ENCODE measurements at regions of chr2 and their contacts with region 1.

Region 1: GRCh38 chr2:229800997-229801754 is 86.8 kb upstream of the DNER start:
- DNase-seq: peak; percentile 79
- H3K4me3 Mint-ChIP-seq: no peak overlapping the region
- H3K27ac Mint-ChIP-seq: no peak overlapping the region
- H3K4me1 Mint-ChIP-seq: peaks cover 9% of the 10 kb centered on the region
- H3K27me3 Mint-ChIP-seq: no peaks in the 10 kb centered on the region
- CTCF ChIP-seq: peak; percentile 65

Region 2: DNA sequence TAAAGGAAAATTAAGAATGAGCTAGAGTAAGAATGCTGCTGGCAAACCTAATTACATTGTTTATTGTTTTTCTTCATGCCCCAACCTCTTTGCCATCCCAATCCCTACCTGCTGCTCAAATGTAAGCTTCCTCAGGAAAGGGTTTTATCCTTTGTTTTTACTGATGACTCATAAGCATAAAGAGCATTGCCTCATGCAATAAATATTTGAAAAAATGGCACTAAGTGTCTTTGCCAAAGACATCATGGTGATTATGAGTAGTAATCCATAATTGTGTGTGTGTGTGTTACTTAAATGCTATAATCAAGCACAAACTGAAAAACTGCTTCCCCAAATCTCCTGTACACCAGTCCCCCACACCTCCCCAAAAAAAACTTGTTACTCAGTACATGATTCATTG is 140.2 kb before region 1 on chr2:
- CTCF ChIA-PET with region 1: no interaction called
- POLR2A ChIA-PET with region 1: no interaction called
- intact Hi-C with region 1: no loop called
- DNase-seq: peak; percentile 65
- H3K4me3 Mint-ChIP-seq: no peak overlapping the region
- H3K27ac Mint-ChIP-seq: no peak overlapping the region
- H3K4me1 Mint-ChIP-seq: peaks cover 16% of the 10 kb centered on the region
- H3K27me3 Mint-ChIP-seq: no peaks in the 10 kb centered on the region
- CTCF ChIP-seq: no peak

Region 3: GRCh38 chr2:229815342-229815741 is 14.2 kb after region 1 on chr2:
- CTCF ChIA-PET with region 1: interaction called, 13 read pairs
- POLR2A ChIA-PET with region 1: interaction called, 4 read pairs
- intact Hi-C with region 1: no loop called
- DNase-seq: no peak
- H3K4me3 Mint-ChIP-seq: no peak overlapping the region
- H3K27ac Mint-ChIP-seq: no peak overlapping the region
- H3K4me1 Mint-ChIP-seq: peaks cover 14% of the 10 kb centered on the region
- H3K27me3 Mint-ChIP-seq: no peaks in the 10 kb centered on the region
- CTCF ChIP-seq: no peak

Region 4: DNA sequence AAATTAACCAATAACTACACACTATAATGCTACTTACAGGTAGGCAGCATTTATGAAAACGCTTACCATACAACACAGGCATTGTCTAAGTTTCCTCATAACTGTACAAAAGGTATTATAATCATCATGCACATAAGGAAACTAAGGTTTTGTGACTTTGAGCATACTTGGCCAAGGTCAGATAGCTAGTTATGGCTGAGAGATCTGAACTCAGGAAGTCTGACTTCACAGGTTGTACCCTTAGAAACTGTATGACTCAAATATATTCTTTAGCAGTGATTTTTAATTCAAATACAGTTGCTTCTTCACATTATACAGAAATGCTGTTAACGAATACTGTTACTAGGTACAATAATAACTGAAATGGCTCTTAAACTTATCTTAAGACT is 31.3 kb after region 1 on chr2:
- CTCF ChIA-PET with region 1: interaction called, 17 read pairs
- POLR2A ChIA-PET with region 1: no interaction called
- intact Hi-C with region 1: no loop called
- DNase-seq: no peak
- H3K4me3 Mint-ChIP-seq: no peak overlapping the region
- H3K27ac Mint-ChIP-seq: no peak overlapping the region
- H3K4me1 Mint-ChIP-seq: no peaks in the 10 kb centered on the region
- H3K27me3 Mint-ChIP-seq: no peaks in the 10 kb centered on the region
- CTCF ChIP-seq: no peak

Region 5: DNA sequence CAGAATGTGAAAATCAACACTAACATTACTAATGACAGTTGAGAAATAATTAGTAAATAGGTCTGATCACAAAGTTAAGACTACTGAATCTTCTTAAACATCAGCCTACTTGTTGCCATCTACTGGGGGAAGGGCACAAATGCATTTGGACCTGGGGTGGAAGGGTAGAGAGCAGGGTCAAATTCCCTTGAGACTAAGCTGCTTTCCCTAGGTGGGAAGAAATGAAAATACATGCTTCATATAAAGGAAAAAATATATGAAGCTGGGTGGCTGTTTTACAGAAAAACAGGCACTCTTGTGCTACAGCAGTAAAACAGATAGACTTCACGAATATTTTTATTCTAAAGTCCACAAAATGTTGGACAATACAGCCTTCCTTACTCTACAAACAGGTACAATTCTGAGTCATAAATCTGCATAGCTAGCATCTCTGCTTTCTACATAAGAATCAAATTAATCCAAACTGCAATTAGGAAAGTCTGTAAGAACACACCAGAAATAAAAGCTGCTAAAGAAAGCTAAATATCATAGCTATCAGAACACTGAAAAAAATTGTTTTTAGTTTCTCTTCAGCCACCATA is 109.7 kb after region 1 on chr2:
- CTCF ChIA-PET with region 1: interaction called, 8 read pairs
- POLR2A ChIA-PET with region 1: no interaction called
- intact Hi-C with region 1: loop called (anchors 1 kb)
- DNase-seq: peak; percentile 46
- H3K4me3 Mint-ChIP-seq: no peak overlapping the region
- H3K27ac Mint-ChIP-seq: no peak overlapping the region
- H3K4me1 Mint-ChIP-seq: peaks cover 27% of the 10 kb centered on the region
- H3K27me3 Mint-ChIP-seq: no peaks in the 10 kb centered on the region
- CTCF ChIP-seq: peak; percentile 21

Region 6: DNA sequence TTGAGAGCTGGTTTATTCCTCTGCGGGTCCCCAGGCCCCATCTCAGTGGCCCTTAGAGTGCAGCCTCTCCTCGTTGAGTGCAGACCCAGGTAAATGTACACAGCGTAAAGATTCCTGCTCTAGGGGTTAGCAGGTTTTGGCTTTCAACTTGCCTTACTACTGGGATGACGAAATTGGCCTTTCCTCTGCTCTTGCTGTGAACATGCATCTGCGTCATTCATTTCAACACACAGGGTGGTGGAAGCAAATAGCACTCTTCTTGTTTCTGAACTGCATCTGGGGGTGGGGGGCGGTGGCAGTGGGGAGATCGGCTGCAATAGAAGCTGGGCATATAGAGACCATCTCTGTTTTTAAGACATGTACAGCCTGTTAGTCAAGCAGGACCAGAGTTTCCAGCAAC is 284.0 kb after region 1 on chr2:
- CTCF ChIA-PET with region 1: no interaction called
- POLR2A ChIA-PET with region 1: no interaction called
- intact Hi-C with region 1: no loop called
- DNase-seq: peak; percentile 68
- H3K4me3 Mint-ChIP-seq: no peak overlapping the region
- H3K27ac Mint-ChIP-seq: no peak overlapping the region
- H3K4me1 Mint-ChIP-seq: no peaks in the 10 kb centered on the region
- H3K27me3 Mint-ChIP-seq: no peaks in the 10 kb centered on the region
- CTCF ChIP-seq: no peak

Region 7: GRCh38 chr2:230582851-230583283 is 781.7 kb after region 1 on chr2:
- CTCF ChIA-PET with region 1: no interaction called
- POLR2A ChIA-PET with region 1: no interaction called
- intact Hi-C with region 1: no loop called
- DNase-seq: no peak
- H3K4me3 Mint-ChIP-seq: no peak overlapping the region
- H3K27ac Mint-ChIP-seq: no peak overlapping the region
- H3K4me1 Mint-ChIP-seq: no peaks in the 10 kb centered on the region
- H3K27me3 Mint-ChIP-seq: no peaks in the 10 kb centered on the region
- CTCF ChIP-seq: no peak

Measured in MCF 10A (cell line).